ENCODE measurements at regions of chr7 and their contacts with region 1.

Region 1: GRCh38 chr7:40057292-40057691 is 77.1 kb downstream of the MPLKIP start:
- DNase-seq: peak; percentile 30
- H3K4me3 ChIP-seq: no peak overlapping the region
- H3K27ac ChIP-seq: no peak overlapping the region
- H3K4me1 ChIP-seq: peaks cover 9% of the 10 kb centered on the region
- H3K27me3 ChIP-seq: no peaks in the 10 kb centered on the region
- CTCF ChIP-seq: no peak
- POLR2A ChIP-seq: no peak

Region 2: GRCh38 chr7:39894904-39895303 is 162.4 kb before region 1 on chr7:
- intact Hi-C with region 1: loop called (anchors 10 kb)
- DNase-seq: no peak
- H3K4me3 ChIP-seq: no peak overlapping the region
- H3K27ac ChIP-seq: no peak overlapping the region
- H3K4me1 ChIP-seq: no peaks in the 10 kb centered on the region
- H3K27me3 ChIP-seq: no peaks in the 10 kb centered on the region
- CTCF ChIP-seq: no peak
- POLR2A ChIP-seq: no peak